Naive thymus-derived CD4-positive, alpha-beta T cell (primary cell): ENCODE measurements at regions of chr7 and their contacts with region 1.

Region 1: DNA sequence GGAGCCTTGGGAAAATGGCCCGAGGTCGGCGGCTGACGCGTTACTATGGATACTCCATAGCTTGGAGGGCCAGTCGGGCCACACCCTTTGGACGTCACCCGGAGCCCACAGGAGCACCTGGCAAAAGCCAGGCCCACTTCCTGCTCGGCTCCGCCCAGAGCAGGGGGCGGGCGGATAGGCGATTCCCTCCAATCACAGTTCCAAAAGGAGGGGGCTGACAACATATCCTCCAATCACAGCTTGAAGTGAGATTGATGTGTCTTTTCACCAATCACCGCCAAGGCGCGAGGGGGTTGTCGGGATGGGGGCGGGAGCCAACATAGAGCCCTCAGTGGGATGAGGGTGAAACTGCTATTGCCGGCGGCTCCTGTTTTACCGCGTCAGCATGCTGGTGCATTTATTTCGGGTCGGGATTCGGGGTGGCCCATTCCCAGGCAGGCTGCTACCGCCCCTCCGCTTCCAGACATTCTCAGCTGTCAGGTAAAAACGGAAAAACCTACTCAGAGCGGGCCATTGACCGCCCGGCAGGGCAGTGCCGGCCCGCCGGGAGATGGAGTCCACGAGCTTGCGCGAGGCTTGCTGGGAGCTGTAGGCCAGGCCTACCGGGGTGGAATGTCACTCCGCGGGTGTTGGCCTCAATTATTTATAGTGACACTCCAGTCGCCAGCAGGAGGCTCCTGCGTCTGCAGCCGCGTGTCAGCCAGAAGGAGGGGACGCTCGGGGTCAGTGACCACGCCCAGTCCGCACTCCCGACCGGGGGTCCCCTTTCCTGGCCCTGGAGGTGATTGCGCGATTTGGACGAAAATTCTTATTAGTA is at the start of gene ABCB8:
- DNase-seq: peak; percentile 89 to 100 (median 99)
- ATAC-seq: peak; percentile 94
- H3K4me3 ChIP-seq: peak within 1 kb of the TSS; percentile 78
- H3K4me3 Mint-ChIP-seq: peak within 1 kb of the TSS; percentile 83 to 98 (median 92)
- H3K27ac ChIP-seq: peak within 1 kb of the TSS; percentile 94
- H3K27ac Mint-ChIP-seq: peak within 1 kb of the TSS; percentile 95 to 100 (median 99)
- H3K4me1 ChIP-seq: peaks cover 6% of the 10 kb centered on the region in 2 donors
- H3K4me1 Mint-ChIP-seq: peaks cover 20 to 40% (median 29%) of the 10 kb centered on the region in 7 donors
- H3K27me3 ChIP-seq: no peaks in the 10 kb centered on the region
- H3K27me3 Mint-ChIP-seq: peaks cover 0 to 6% (median 0%) of the 10 kb centered on the region in 5 donors
- total RNA-seq, gene ABCB8: 59.7 to 88.0 (median 76.6) TPM

Region 2: DNA sequence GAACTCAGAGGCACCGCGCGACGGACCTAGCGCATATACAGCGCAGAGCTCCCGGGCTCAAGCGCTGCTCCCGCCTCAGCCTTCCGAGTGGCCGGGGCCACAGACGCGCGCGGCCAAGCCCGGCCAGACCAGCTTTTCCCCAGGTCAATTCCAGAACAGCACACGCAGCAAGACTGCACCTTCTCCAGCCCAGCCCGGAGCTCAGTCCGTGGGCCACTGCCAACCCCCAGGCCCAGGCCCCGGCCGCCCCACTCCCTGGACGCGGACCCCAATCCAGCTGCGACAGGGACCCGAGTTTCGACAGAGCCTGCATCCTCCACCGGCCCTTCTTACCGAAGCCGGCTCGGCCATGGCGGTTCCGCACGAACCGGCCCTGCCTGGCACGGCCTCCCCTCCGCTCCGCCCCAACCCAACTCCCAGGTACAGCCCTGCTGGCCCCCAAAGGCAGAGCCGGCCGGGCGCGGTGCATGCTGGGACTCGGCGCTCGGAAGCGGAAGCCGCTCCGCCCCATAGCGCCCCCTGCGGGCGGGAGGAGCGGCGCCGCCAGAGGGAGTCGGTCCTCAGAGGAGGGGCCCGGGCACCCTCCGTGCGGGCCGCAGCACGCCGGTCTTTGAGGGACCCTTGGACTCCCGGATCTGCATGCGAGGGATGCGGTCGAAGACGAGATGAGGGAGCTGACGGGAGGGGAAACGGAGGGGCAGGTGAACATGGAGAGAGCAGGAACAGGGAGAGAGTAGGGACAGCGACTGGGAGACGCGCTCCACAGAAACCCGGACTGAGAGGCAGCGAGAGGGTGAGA is 1902.3 kb before region 1 on chr7 and contains the start of gene ZNF425:
- CTCF ChIA-PET with region 1: no interaction called
- POLR2A ChIA-PET with region 1: no interaction called
- intact Hi-C with region 1: loop called in 1 of 2 experiments (anchors 2 kb)
- DNase-seq: peak; percentile 87 to 98 (median 92)
- ATAC-seq: peak; percentile 98
- H3K4me3 ChIP-seq: peak within 1 kb of the TSS; percentile 99
- H3K4me3 Mint-ChIP-seq: peak within 1 kb of the TSS; percentile 91 to 100 (median 100)
- H3K27ac ChIP-seq: peak within 1 kb of the TSS; percentile 91
- H3K27ac Mint-ChIP-seq: peak within 1 kb of the TSS; percentile 90 to 100 (median 98)
- H3K4me1 ChIP-seq: no peaks in the 10 kb centered on the region
- H3K4me1 Mint-ChIP-seq: peaks cover 19 to 28% (median 22%) of the 10 kb centered on the region in 7 donors
- H3K27me3 ChIP-seq: no peaks in the 10 kb centered on the region
- H3K27me3 Mint-ChIP-seq: no peaks in the 10 kb centered on the region
- total RNA-seq, gene ZNF425: 0.61 to 4.9 (median 1.0) TPM

Region 3: GRCh38 chr7:149838224-149838947 is 1190.0 kb before region 1 on chr7 and contains the start of gene ZNF862:
- CTCF ChIA-PET with region 1: no interaction called
- POLR2A ChIA-PET with region 1: no interaction called
- intact Hi-C with region 1: loop called in 1 of 2 experiments (anchors 1 kb)
- DNase-seq: peak; percentile 84 to 96 (median 94)
- ATAC-seq: peak; percentile 99
- H3K4me3 ChIP-seq: peak within 1 kb of the TSS; percentile 67
- H3K4me3 Mint-ChIP-seq: peak within 1 kb of the TSS; percentile 85 to 97 (median 91)
- H3K27ac ChIP-seq: peak within 1 kb of the TSS; percentile 79
- H3K27ac Mint-ChIP-seq: peak within 1 kb of the TSS; percentile 77 to 96 (median 88)
- H3K4me1 ChIP-seq: peaks cover 12 to 22% of the 10 kb centered on the region in 2 donors
- H3K4me1 Mint-ChIP-seq: peaks cover 25 to 52% (median 48%) of the 10 kb centered on the region in 7 donors
- H3K27me3 ChIP-seq: no peaks in the 10 kb centered on the region
- H3K27me3 Mint-ChIP-seq: peaks cover 0 to 15% (median 3%) of the 10 kb centered on the region in 5 donors
- total RNA-seq, gene ZNF862: 36.9 to 112 (median 41.8) TPM

Region 4: DNA sequence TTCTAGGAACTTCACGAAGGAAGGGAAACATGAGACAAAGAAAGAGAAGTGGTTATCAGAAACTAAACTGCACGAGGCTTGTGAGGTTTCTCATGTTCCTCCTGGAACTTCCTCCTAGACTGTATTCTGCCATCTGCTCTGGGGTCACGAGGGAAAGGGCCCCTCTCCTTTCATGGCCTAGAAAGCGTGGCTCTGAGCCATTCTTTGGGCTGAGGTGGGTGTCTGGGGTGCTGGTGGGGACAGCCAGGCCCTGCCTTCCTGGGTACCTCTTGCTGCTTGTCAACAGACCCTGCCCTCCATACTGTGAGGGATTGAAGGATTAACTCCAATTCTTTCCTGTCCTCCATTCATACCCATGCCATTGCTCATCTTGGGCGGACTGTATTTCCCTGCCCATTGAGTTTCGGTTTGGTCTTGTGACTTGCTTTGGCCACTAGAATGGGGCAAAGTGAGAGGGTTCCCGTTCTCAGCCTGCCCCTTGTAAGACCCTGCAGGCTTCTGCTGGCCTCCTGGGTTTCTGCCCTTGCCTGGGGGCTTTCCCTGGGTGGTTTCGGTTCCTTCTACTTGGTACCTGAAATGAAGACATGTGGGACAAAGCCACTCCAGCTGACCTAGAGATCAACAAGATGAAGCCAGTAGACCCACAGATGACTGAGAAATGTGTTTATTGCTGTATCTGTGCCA is 592.8 kb before region 1 on chr7:
- CTCF ChIA-PET with region 1: no interaction called
- POLR2A ChIA-PET with region 1: no interaction called
- intact Hi-C with region 1: no loop called
- DNase-seq: no peak
- ATAC-seq: peak; percentile 65
- H3K4me3 ChIP-seq: no peak overlapping the region
- H3K4me3 Mint-ChIP-seq: no peak overlapping the region
- H3K27ac ChIP-seq: no peak overlapping the region
- H3K27ac Mint-ChIP-seq: no peak overlapping the region
- H3K4me1 ChIP-seq: no peaks in the 10 kb centered on the region
- H3K4me1 Mint-ChIP-seq: peaks cover 12 to 55% (median 16%) of the 10 kb centered on the region in 7 donors
- H3K27me3 ChIP-seq: no peaks in the 10 kb centered on the region
- H3K27me3 Mint-ChIP-seq: peaks cover 0 to 4% (median 0%) of the 10 kb centered on the region in 5 donors

Region 5: GRCh38 chr7:150586785-150587152 is 441.6 kb before region 1 on chr7:
- CTCF ChIA-PET with region 1: no interaction called
- POLR2A ChIA-PET with region 1: no interaction called
- intact Hi-C with region 1: no loop called
- DNase-seq: no peak
- ATAC-seq: peak; percentile 61
- H3K4me3 ChIP-seq: no peak overlapping the region
- H3K4me3 Mint-ChIP-seq: peak overlapping the region in 9 of 10 donors; percentile 12 to 56 (median 38)
- H3K27ac ChIP-seq: peak overlapping the region; percentile 11
- H3K27ac Mint-ChIP-seq: peak overlapping the region; percentile 63 to 97 (median 80)
- H3K4me1 ChIP-seq: peaks cover 16 to 29% of the 10 kb centered on the region in 2 donors
- H3K4me1 Mint-ChIP-seq: peaks cover 27 to 87% (median 75%) of the 10 kb centered on the region in 7 donors
- H3K27me3 ChIP-seq: no peaks in the 10 kb centered on the region
- H3K27me3 Mint-ChIP-seq: no peaks in the 10 kb centered on the region

Region 6: DNA sequence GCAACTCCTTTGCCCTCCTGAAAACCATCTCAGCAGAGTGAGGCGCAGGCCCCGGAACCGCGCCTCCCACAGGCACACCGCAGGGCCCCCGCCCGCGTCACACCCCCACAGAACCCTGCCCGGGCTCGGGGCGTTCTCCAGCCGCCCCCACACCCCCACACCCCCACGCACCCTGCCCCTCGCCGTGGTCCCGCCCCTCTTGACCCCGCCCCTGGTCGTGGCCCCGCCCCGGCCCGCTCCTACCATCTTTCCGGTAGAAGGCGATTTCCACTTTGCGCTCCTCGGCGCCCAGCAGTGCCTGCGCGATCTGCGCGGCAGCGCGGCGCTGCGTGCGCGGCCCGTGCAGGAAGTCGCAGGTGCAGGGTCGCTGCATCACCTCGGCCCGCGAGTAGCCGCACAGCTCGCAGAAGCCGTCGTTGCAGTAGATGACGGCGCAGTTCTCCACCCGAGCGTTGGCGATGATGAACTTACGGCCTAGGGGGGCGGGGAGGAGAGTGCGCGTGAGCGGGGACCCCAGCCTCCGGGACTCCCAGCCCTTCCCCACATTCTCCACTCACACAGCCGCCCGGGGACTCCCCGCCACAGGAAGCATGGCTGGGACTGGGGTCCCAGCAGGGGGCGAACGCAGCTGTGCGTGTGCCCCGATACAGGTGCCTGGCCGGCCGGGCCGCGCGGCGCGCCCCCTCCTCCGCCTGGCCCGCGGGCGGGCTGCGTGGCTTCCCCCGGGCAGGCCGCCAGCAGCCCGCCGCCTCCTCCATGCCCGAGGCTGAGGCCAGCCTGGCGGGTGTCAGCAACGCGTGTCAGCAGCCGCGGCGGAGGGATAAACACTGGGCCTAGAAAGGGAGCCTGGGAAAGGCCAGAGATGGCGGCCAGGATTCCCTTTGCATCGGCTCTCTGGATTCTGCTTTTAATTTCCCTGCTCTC is 53.6 kb before region 1 on chr7:
- CTCF ChIA-PET with region 1: no interaction called
- POLR2A ChIA-PET with region 1: interaction called, 6 read pairs
- intact Hi-C with region 1: loop called in 1 of 2 experiments (anchors 1 kb)
- DNase-seq: peak; percentile 63 to 84 (median 80)
- ATAC-seq: peak; percentile 85
- H3K4me3 ChIP-seq: peak overlapping the region; percentile 63
- H3K4me3 Mint-ChIP-seq: peak overlapping the region; percentile 85 to 92 (median 88)
- H3K27ac ChIP-seq: peak overlapping the region; percentile 73
- H3K27ac Mint-ChIP-seq: peak overlapping the region; percentile 59 to 97 (median 95)
- H3K4me1 ChIP-seq: peaks cover 20 to 47% of the 10 kb centered on the region in 2 donors
- H3K4me1 Mint-ChIP-seq: peaks cover 33 to 62% (median 55%) of the 10 kb centered on the region in 7 donors
- H3K27me3 ChIP-seq: peaks cover 7 to 13% of the 10 kb centered on the region in 2 donors
- H3K27me3 Mint-ChIP-seq: peaks cover 9 to 36% (median 25%) of the 10 kb centered on the region in 5 donors

Region 7: GRCh38 chr7:151008511-151009323 is 19.6 kb before region 1 on chr7:
- CTCF ChIA-PET with region 1: interaction called, 6 read pairs
- POLR2A ChIA-PET with region 1: interaction called, 11 read pairs
- intact Hi-C with region 1: loop called (anchors 1 kb)
- DNase-seq: peak; percentile 45 to 82 (median 65)
- ATAC-seq: peak; percentile 59
- H3K4me3 ChIP-seq: peak overlapping the region; percentile 62
- H3K4me3 Mint-ChIP-seq: peak overlapping the region; percentile 80 to 90 (median 85)
- H3K27ac ChIP-seq: peak overlapping the region; percentile 73
- H3K27ac Mint-ChIP-seq: peak overlapping the region; percentile 73 to 97 (median 91)
- H3K4me1 ChIP-seq: peaks cover 49 to 66% of the 10 kb centered on the region in 2 donors
- H3K4me1 Mint-ChIP-seq: peaks cover 39 to 77% (median 64%) of the 10 kb centered on the region in 7 donors
- H3K27me3 ChIP-seq: no peaks in the 10 kb centered on the region
- H3K27me3 Mint-ChIP-seq: no peaks in the 10 kb centered on the region

Region 8: DNA sequence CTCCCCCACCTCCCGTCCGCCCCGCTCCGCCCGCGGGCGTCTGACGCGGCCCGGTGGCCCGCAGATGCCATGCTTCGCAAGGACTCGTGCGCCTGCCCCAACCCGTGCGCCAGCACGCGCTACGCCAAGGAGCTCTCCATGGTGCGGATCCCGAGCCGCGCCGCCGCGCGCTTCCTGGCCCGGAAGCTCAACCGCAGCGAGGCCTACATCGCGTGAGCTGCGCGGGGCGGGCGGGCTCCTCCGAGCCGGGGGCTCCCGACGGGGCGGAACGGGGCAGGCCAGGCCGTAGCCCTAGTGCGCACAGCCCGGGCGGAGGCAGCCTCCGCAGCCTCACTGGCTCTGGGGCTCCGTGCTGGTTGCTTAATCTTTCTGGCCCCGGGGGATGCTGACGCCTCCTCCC is 22.8 kb after region 1 on chr7:
- CTCF ChIA-PET with region 1: interaction called, 3 read pairs
- POLR2A ChIA-PET with region 1: interaction called, 4 read pairs
- intact Hi-C with region 1: loop called in 1 of 2 experiments (anchors 1 kb)
- DNase-seq: peak; percentile 55 to 75 (median 69)
- ATAC-seq: peak; percentile 88
- H3K4me3 ChIP-seq: no peak overlapping the region
- H3K4me3 Mint-ChIP-seq: no peak overlapping the region
- H3K27ac ChIP-seq: no peak overlapping the region
- H3K27ac Mint-ChIP-seq: no peak overlapping the region
- H3K4me1 ChIP-seq: peaks cover 0 to 6% of the 10 kb centered on the region in 2 donors
- H3K4me1 Mint-ChIP-seq: peaks cover 6 to 19% (median 14%) of the 10 kb centered on the region in 7 donors
- H3K27me3 ChIP-seq: no peaks in the 10 kb centered on the region
- H3K27me3 Mint-ChIP-seq: peaks cover 0 to 10% (median 0%) of the 10 kb centered on the region in 5 donors

Region 9: DNA sequence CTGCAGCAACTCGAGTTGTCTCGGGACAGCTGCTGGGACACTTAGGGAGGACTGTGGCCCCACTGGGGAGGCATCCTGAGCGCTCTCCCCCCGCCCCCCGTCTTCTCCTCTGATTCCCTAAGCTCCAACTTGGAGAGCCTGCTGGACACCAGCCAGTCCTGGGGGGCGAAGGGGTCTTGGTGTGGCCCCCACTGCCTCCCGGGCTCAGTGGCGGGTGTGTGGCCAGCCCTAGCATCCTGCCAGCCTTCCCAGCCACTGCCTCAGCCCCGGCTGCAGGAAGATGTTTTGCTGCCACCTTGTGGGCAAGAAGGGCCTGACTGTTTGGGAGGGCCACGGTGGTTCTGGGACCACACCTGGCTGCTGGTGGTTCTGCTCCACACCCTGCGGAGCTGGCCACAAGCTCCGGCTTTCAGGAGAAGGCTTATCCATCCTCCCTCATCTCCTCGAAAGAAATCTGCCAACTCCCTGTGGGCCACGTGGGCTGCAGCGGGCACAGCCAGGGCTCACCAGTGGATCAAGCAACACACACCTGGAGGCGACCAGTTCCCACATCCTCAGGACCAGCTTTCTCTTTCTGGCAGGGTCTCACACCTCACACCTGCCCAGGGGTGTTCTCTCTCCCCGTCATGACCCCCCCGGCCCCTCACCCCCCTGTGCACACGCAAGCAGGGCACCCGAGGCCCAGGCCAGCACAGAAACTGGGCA is 82.8 kb after region 1 on chr7:
- CTCF ChIA-PET with region 1: interaction called, 5 read pairs
- POLR2A ChIA-PET with region 1: interaction called, 4 read pairs
- intact Hi-C with region 1: loop called (anchors 1 kb)
- DNase-seq: peak; percentile 41 to 79 (median 71)
- ATAC-seq: peak; percentile 82
- H3K4me3 ChIP-seq: no peak overlapping the region
- H3K4me3 Mint-ChIP-seq: peak overlapping the region in 1 of 10 donors; percentile 29
- H3K27ac ChIP-seq: no peak overlapping the region
- H3K27ac Mint-ChIP-seq: no peak overlapping the region
- H3K4me1 ChIP-seq: no peaks in the 10 kb centered on the region
- H3K4me1 Mint-ChIP-seq: peaks cover 0 to 9% (median 4%) of the 10 kb centered on the region in 7 donors
- H3K27me3 ChIP-seq: peaks cover 0 to 4% of the 10 kb centered on the region in 2 donors
- H3K27me3 Mint-ChIP-seq: peaks cover 0 to 20% (median 0%) of the 10 kb centered on the region in 5 donors